SK-N-SH (cell line): ENCODE measurements at regions of chr20 and their contacts with region 1.

Region 1: DNA sequence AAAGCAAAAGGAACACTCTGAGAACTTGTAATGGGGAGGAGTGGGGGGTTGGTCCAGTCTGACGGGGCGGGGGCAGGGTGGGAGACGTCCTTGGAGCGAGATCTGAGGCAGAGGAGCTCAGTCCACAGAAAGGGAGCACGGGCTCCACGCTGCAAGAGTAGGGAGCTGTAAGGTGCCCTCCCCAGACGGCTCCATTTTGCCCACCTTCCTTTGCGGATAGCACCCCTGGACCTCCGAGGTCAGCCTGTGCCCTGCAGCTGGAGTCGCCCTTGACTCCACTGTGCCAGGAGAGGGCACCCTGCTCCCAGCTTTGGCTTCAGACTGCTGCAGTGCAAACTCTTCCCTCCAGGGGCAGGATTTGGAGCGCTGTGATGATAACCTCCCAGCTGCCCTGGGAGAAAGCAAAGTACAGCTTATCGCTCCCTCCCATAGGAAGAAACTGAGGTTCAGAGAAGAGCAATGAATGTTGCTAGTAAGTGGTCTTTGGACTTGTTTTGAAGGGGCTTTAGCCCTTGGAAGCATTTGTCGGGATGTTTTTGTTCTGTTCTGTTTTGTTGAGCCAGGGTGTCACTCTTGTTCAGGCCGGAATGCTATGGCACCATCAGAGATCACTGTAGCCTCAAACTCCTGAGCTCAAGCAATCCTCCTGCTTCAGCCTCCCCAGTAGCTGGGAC is 9.5 kb upstream of the AHCY start:
- DNase-seq: peak; percentile 91
- H3K4me3 ChIP-seq: peak overlapping the region; percentile 30 to 55; a peak in 3 of 4 replicates
- H3K27ac ChIP-seq: no peak overlapping the region
- H3K4me1 ChIP-seq: peaks cover 0 to 4% of the 10 kb centered on the region in 2 experiments; a peak in 2 of 4 replicates
- H3K27me3 ChIP-seq: no peaks in the 10 kb centered on the region
- CTCF ChIP-seq: peak; percentile 99
- EP300 ChIP-seq: no peak
- RAD21 ChIP-seq: peak; percentile 99

Region 2: GRCh38 chr20:34190679-34191090 is 122.0 kb before region 1 on chr20:
- CTCF ChIA-PET with region 1: interaction called, 38 read pairs
- POLR2A ChIA-PET with region 1: no interaction called
- DNase-seq: peak; percentile 84
- H3K4me3 ChIP-seq: peak overlapping the region in 1 of 2 experiments; percentile 9; a peak in 1 of 4 replicates
- H3K27ac ChIP-seq: no peak overlapping the region
- H3K4me1 ChIP-seq: peaks cover 0 to 20% of the 10 kb centered on the region in 2 experiments; a peak in 2 of 4 replicates
- H3K27me3 ChIP-seq: peaks cover 9% of the 10 kb centered on the region; the same call in 1 of the 2 replicates
- CTCF ChIP-seq: peak; percentile 85
- EP300 ChIP-seq: no peak
- RAD21 ChIP-seq: peak; percentile 96

Region 3: DNA sequence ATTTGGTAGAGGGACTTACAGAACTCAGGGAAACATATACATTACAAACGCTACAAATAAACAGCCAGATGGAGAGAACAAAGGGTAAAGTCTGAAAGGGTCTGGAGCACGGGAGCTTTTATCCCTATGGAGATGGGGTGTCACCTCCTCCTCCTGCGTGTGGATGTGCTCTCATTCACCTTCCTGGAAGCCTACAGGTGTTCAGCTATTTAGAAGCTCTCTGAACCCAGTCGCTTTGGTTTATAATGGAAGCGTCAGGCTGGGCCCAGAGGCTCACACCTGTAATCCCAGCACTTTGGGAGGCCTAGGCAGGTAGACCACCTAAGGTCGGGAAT is 32.7 kb after region 1 on chr20:
- CTCF ChIA-PET with region 1: interaction called, 23 read pairs
- POLR2A ChIA-PET with region 1: no interaction called
- DNase-seq: no peak
- H3K4me3 ChIP-seq: no peak overlapping the region
- H3K27ac ChIP-seq: no peak overlapping the region
- H3K4me1 ChIP-seq: no peaks in the 10 kb centered on the region
- H3K27me3 ChIP-seq: no peaks in the 10 kb centered on the region
- CTCF ChIP-seq: no peak
- EP300 ChIP-seq: no peak
- RAD21 ChIP-seq: no peak

Region 4: GRCh38 chr20:34473262-34473883 is 160.7 kb after region 1 on chr20:
- CTCF ChIA-PET with region 1: interaction called, 101 read pairs
- POLR2A ChIA-PET with region 1: no interaction called
- DNase-seq: peak; percentile 73
- H3K4me3 ChIP-seq: no peak overlapping the region
- H3K27ac ChIP-seq: peak overlapping the region in 1 of 2 experiments; percentile 36; a peak in 1 of 4 replicates
- H3K4me1 ChIP-seq: peaks cover 0 to 7% of the 10 kb centered on the region in 2 experiments; a peak in 2 of 4 replicates
- H3K27me3 ChIP-seq: no peaks in the 10 kb centered on the region
- CTCF ChIP-seq: peak; percentile 55
- EP300 ChIP-seq: no peak
- RAD21 ChIP-seq: peak; percentile 71

Region 5: DNA sequence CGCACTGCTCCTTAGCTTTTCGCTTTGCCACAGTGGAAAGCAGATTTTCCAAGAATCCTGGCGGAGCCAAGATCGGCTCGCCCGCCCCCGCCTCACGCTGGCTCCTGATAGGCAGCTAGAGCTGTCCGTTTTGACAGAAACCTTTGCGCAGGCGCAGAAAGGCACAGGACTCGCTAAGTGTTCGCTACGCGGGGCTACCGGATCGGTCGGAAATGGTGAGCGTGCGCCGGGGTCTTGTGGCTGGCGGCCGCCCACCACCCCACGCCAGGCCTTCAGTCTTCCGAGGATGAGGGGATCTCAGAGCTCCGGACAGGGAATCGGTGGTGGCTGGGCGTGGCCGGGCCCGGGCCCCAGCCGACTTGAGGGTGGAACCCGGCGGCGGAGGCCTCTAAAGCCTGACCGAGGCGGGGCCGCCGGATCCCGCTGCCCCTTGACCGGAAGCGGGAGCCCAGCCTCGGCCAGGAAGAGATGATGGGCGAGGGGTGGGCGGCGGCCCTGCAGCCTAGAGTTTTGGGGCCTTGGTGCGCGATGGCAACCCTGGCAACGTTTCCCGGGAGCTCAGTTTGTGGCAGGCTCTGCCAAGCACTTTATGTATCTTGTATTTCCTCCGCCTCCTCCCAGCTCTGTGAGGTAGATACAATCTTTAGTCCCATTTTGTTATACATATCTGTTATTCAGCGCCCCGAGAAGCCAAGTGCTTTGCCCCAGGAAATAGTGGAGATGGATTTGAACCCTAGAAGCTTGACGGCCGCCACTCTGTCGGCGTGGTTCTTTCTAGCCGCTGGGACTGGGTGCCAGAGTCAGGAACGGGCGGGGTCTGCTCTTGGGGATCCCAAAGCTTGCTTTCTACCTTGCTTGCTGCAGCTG is 203.8 kb after region 1 on chr20 and contains the start of gene DYNLRB1:
- CTCF ChIA-PET with region 1: interaction called, 72 read pairs
- POLR2A ChIA-PET with region 1: interaction called, 5 read pairs
- DNase-seq: peak; percentile 93
- H3K4me3 ChIP-seq: peak within 1 kb of the TSS; percentile 73 to 92
- H3K27ac ChIP-seq: peak within 1 kb of the TSS; percentile 92
- H3K4me1 ChIP-seq: peaks cover 0 to 9% of the 10 kb centered on the region in 2 experiments; a peak in 2 of 4 replicates
- H3K27me3 ChIP-seq: no peaks in the 10 kb centered on the region
- CTCF ChIP-seq: no peak
- EP300 ChIP-seq: no peak
- RAD21 ChIP-seq: no peak
- polyA plus RNA-seq, gene DYNLRB1: 298 and 402 TPM in 2 replicates

Region 6: GRCh38 chr20:34704177-34705007 is 391.7 kb after region 1 on chr20 and contains the start of gene TP53INP2:
- CTCF ChIA-PET with region 1: interaction called, 13 read pairs
- POLR2A ChIA-PET with region 1: interaction called, 3 read pairs
- DNase-seq: peak; percentile 96
- H3K4me3 ChIP-seq: peak within 1 kb of the TSS; percentile 84 to 92
- H3K27ac ChIP-seq: peak within 1 kb of the TSS; percentile 86 to 94
- H3K4me1 ChIP-seq: peaks cover 8 to 21% of the 10 kb centered on the region in 2 experiments; a peak in 3 of 4 replicates
- H3K27me3 ChIP-seq: no peaks in the 10 kb centered on the region
- CTCF ChIP-seq: no peak
- EP300 ChIP-seq: no peak
- RAD21 ChIP-seq: no peak
- polyA plus RNA-seq, gene TP53INP2: 4.9 and 6.4 TPM in 2 replicates